IMR-90 (cell line): ENCODE measurements at regions of chr11 and their contacts with region 1.

Region 1: GRCh38 chr11:110235966-110236365 is 60.4 kb downstream of the RDX start:
- DNase-seq: no peak
- ATAC-seq: no peak
- H3K4me3 ChIP-seq: no peak overlapping the region
- H3K27ac ChIP-seq: no peak overlapping the region
- H3K4me1 ChIP-seq: no peaks in the 10 kb centered on the region
- H3K27me3 ChIP-seq: no peaks in the 10 kb centered on the region
- CTCF ChIP-seq: no peak
- POLR2A ChIP-seq: no peak
- RAD21 ChIP-seq: no peak

Region 2: DNA sequence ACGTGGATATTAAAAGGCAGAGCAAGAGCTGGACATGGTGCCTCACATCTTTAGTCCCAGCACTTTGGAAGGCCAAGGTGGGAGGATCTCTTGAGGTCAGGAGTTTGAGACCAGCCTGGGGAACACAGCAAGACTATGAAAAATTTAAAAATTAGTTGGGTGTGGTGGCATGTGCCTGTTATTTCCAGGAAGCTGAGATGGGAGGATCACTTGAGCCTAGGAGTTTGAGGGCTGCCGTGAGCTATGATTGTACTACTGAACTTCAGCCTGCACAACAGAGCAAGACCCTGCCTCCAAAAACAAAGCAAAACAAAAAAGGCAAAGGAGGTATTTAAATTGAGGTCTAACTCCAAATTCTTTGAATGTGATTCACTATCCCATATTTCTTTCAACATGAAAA is 37.0 kb after region 1 on chr11:
- CTCF ChIA-PET with region 1: no interaction called
- POLR2A ChIA-PET with region 1: no interaction called
- dilution Hi-C with region 1: no loop called
- in situ Hi-C with region 1: no loop called
- intact Hi-C with region 1: loop called (anchors 5 kb)
- DNase-seq: no peak
- ATAC-seq: no peak
- H3K4me3 ChIP-seq: no peak overlapping the region
- H3K27ac ChIP-seq: no peak overlapping the region
- H3K4me1 ChIP-seq: no peaks in the 10 kb centered on the region
- H3K27me3 ChIP-seq: no peaks in the 10 kb centered on the region
- CTCF ChIP-seq: no peak
- POLR2A ChIP-seq: no peak
- RAD21 ChIP-seq: no peak

Region 3: DNA sequence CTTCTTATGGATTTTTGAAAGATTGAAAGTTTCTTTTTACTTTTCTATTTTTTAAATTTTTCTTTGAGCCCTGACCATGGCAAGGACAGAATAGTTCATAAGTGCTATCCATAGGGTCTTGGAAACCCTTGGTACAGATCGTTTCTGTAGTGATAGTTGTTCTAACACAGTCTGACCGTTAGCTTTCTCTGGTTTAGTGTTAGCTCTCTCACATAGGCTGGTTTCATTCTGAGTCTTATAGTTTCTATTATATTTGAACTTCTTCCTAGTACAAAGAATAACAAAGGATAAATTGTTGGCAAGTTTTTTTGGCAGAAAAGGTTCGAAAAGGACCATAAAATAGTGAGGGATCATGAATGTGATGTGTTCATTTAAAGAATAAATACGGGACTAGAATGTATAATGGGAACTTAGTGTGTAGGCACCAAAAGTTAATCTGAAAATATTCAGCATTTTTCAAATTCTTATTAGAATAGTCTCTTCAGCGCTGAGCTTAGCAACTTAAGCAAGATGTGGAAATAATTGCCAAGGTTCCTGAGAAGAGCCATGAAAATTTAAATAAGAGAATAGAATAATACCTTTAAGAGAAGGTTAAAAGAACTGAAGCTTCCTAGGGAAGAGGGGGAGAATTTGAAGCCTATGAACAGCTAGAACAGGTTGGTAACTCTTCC is 217.9 kb after region 1 on chr11:
- CTCF ChIA-PET with region 1: no interaction called
- POLR2A ChIA-PET with region 1: no interaction called
- dilution Hi-C with region 1: no loop called
- in situ Hi-C with region 1: no loop called
- intact Hi-C with region 1: no loop called
- DNase-seq: no peak
- ATAC-seq: peak; percentile 49; the same call in 1 of the 2 replicates
- H3K4me3 ChIP-seq: no peak overlapping the region
- H3K27ac ChIP-seq: no peak overlapping the region
- H3K4me1 ChIP-seq: no peaks in the 10 kb centered on the region
- H3K27me3 ChIP-seq: no peaks in the 10 kb centered on the region
- CTCF ChIP-seq: no peak
- POLR2A ChIP-seq: no peak
- RAD21 ChIP-seq: no peak